Stomach (tissue), 19 donors: ENCODE measurements at regions of chr1 and their contacts with region 1.

Region 1: GRCh38 chr1:56584910-56585528 is 5.7 kb upstream of the PLPP3 start:
- DNase-seq: peak in 1 of 2 donors; percentile 83
- H3K4me3 ChIP-seq: no peak overlapping the region
- H3K27ac ChIP-seq: peak overlapping the region in 1 of 5 donors; percentile 18
- H3K4me1 ChIP-seq: peaks cover 0 to 4% (median 3%) of the 10 kb centered on the region in 4 donors
- H3K27me3 ChIP-seq: no peaks in the 10 kb centered on the region
- CTCF ChIP-seq: peak in 5 of 7 experiments; percentile 70 to 90 (median 80)
- EP300 ChIP-seq: no peak
- POLR2A ChIP-seq: no peak

Region 2: DNA sequence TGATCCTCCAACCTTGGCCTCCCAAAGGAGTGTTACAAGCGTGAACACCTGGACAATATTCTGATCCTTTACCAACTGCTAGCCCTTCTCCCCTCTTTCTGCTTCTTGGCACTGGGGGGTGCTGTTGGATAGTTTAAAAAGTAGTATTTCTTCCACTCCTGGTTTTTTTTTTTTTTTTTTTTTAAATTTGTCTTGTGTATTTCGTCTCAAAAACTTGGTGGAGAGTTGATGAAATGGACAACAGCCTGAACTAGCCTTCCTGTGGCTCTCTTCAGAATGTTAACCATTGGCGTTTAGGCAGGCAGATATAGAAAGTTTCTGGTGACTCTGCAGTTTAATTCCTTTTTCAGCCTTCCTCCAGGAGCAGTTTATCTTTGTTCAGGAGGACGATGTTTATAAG is 1300.2 kb before region 1 on chr1:
- intact Hi-C with region 1: loop called (anchors 10 kb)
- DNase-seq: peak in 1 of 2 donors; percentile 79
- H3K4me3 ChIP-seq: no peak overlapping the region
- H3K27ac ChIP-seq: no peak overlapping the region
- H3K4me1 ChIP-seq: peaks cover 0 to 4% (median 0%) of the 10 kb centered on the region in 4 donors
- H3K27me3 ChIP-seq: no peaks in the 10 kb centered on the region
- CTCF ChIP-seq: peak in 4 of 7 experiments; percentile 13 to 51 (median 41)
- EP300 ChIP-seq: no peak
- POLR2A ChIP-seq: no peak

Region 3: GRCh38 chr1:55375617-55376258 is 1209.3 kb before region 1 on chr1:
- intact Hi-C with region 1: loop called (anchors 10 kb)
- DNase-seq: peak in 1 of 2 donors; percentile 79
- H3K4me3 ChIP-seq: no peak overlapping the region
- H3K27ac ChIP-seq: peak overlapping the region in 4 of 5 donors; percentile 9 to 57 (median 50)
- H3K4me1 ChIP-seq: peaks cover 0 to 8% (median 0%) of the 10 kb centered on the region in 4 donors
- H3K27me3 ChIP-seq: no peaks in the 10 kb centered on the region
- CTCF ChIP-seq: peak in 5 of 7 experiments; percentile 72 to 92 (median 90)
- EP300 ChIP-seq: no peak
- POLR2A ChIP-seq: no peak

Region 4: DNA sequence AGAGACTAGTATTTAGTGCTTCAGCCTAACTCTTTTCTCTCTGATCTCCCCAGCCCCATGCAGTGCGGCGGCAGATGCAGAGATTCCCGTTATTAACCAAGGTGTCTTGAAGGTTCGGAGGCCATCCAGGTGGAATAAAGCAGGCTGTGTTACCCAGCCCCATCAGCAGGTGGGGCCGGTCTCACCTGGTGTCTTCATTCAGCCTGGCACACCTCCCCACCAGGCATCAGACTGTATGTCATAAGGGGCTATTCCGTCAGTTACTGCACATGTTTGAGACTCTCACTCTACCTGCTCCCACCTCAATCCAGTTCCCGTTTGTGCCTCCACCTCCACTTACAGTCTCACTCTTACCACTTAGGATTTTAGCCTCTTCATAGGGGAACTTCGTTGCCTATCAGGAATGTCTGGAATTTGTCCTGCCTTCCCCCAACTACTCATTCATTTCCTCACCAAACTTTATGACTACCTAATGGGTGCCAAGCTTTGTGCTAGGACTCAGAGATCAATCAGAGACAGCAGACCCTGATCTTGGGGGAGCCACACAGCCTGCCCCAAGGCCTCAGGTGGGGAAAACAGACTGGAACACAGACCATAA is 175.8 kb before region 1 on chr1:
- intact Hi-C with region 1: loop called (anchors 10 kb)
- DNase-seq: peak; percentile 55 to 77
- H3K4me3 ChIP-seq: no peak overlapping the region
- H3K27ac ChIP-seq: no peak overlapping the region
- H3K4me1 ChIP-seq: peaks cover 5 to 9% (median 7%) of the 10 kb centered on the region in 4 donors
- H3K27me3 ChIP-seq: no peaks in the 10 kb centered on the region
- CTCF ChIP-seq: peak in 5 of 7 experiments; percentile 46 to 77 (median 58)
- EP300 ChIP-seq: no peak
- POLR2A ChIP-seq: no peak